AG04449 (cell line): ENCODE measurements at regions of chr3 and their contacts with region 1.

Region 1: DNA sequence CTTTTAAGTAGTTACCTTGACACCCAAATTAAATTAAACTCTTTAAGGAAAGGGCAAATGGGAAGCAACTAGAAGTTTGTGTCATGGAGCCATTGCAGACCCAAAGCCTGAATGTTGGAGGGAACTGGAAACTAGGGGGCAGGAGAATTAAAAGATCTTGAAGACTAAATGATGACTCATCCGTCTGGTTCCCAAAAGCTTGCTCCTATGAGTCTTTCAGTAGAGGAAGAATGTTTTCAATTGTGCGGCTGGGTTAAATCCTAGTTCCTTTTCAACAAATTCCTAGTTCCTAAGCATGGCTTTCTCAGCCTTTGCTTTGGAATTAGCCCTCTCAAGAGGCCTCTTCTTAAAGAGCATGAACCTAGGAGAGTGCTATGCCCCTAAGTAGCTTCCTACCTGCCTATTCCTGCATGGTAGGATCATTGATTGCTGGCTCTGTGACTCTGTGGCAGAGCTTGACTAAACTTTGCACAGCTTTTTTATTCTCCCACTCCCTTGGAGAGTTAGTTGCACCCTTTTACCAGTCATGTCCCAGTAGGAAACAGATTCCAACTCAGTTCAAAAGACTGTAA is 17.7 kb downstream of the CLEC3B start:
- DNase-seq: peak; percentile 78
- H3K4me3 ChIP-seq: no peak overlapping the region
- CTCF ChIP-seq: peak; percentile 25

Region 2: DNA sequence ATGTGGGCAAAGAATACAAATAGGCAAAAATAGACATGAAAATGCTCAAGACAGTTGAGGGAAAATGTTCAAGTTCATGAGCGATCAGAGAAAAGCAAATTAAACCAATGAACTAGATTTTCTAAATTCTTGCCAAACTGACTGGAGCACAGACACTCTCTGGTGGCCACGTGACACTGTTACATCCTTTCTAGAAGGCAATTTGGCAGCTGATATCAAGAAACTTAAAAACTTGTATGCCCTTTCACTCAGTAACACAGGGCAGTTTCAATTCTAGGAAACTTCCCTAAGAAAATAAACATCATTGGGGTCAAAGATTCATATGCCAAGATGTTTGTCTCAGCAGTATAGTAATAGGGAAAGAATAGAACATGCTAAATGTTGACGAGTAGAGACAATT is 1300.9 kb before region 1 on chr3:
- CTCF ChIA-PET with region 1: no interaction called
- POLR2A ChIA-PET with region 1: no interaction called
- DNase-seq: no peak
- H3K4me3 ChIP-seq: no peak overlapping the region
- CTCF ChIP-seq: peak; percentile 54

Region 3: DNA sequence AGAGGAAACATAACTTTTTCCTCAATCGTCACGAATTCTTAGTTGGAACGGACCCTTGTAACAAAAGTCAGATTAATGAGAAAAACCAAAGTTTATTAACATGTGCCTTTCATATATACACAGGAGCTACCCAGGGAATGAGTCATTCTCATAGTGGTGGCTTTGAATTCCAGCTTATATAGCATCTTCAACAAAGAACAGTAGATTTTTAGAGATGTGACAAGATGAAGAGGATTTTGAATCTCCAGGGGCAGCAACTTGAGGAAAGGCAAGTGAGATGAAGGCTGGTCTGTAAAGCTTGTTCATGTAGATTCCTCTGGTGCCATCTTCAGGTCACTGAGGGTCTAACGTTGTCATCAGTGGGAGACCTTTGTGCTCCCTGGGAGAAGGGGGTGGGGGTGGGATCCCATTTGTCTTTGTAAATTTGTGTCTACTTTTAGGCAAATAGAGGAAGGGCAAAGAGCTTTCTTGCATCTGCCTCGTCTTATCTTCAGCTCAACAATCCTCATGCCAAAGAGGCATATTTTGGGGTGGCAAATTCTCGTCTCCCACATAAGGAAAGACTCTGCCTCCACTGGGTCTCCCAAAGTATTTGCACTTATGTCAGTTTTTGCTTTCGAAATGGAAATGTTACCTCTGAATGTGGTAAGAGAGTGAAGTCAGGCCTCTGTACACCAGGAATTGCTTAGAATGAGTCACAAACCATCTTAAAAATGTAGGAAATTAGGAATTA is 11.8 kb after region 1 on chr3:
- CTCF ChIA-PET with region 1: interaction called, 98 read pairs
- POLR2A ChIA-PET with region 1: interaction called, 3 read pairs
- DNase-seq: no peak
- H3K4me3 ChIP-seq: no peak overlapping the region
- CTCF ChIP-seq: peak; percentile 5

Region 4: DNA sequence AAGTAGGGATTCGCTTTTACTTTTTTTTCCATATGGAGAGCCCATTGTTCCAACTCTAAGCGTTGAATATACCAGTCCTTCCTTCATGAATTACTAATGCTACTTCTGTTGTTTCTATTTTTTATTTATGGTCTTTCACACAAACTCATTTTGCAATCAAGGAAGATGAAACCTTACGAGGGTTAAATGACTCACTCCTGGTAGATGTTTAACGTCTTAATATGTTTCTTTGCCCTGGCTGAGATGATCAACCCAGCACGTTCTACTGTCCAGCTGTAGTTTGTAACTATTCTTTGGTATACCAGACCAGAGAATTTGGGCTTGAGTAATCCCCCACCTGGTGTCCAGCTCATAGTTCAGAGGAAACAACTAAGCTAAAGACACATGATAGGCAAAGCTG is 79.2 kb after region 1 on chr3:
- CTCF ChIA-PET with region 1: interaction called, 10 read pairs
- POLR2A ChIA-PET with region 1: interaction called, 3 read pairs
- DNase-seq: peak; percentile 78
- H3K4me3 ChIP-seq: no peak overlapping the region
- CTCF ChIP-seq: no peak

Region 5: DNA sequence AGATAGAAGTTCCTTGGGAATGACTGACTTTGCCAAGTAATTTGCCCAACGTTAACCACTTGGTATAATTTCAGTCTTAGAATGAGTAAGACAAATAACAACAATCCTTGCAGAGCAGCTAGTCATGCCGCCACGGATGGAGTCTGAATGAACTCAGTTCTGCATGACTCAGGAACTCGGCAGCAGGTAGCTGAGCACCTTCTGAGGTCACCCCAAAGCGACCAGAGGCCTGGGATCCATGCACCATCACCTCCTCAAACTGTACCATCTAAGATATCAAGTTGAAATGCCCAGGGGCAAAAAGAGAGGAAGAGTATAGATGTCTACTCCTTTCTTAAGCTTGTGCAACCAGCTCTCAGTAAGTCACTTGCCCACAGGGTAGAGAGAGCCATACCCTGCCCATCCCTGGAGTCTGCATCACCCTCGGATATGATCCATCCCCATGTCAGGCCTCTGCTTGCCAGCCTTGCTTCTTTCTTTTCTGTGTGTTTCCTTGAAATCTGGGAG is 110.9 kb after region 1 on chr3:
- CTCF ChIA-PET with region 1: interaction called, 12 read pairs
- POLR2A ChIA-PET with region 1: no interaction called
- DNase-seq: no peak
- H3K4me3 ChIP-seq: no peak overlapping the region
- CTCF ChIP-seq: no peak

Region 6: GRCh38 chr3:45224824-45225464 is 181.1 kb after region 1 on chr3:
- CTCF ChIA-PET with region 1: interaction called, 621 read pairs
- POLR2A ChIA-PET with region 1: no interaction called
- DNase-seq: no peak
- H3K4me3 ChIP-seq: peak overlapping the region; percentile 75
- CTCF ChIP-seq: peak; percentile 86